Activated naive CD4-positive, alpha-beta T cell treated with anti-CD3 and anti-CD28 coated beads, Interleukin-2, amount 10 ng/mL, durations not matched to agents 7 days and 5 days (primary cell): ENCODE measurements at regions of chr4 and their contacts with region 1.

Region 1: GRCh38 chr4:98995183-98996055 is at the start of gene METAP1:
- DNase-seq: peak; percentile 97
- H3K4me3 Mint-ChIP-seq: peak within 1 kb of the TSS; percentile 81
- H3K27ac Mint-ChIP-seq: peak within 1 kb of the TSS; percentile 98
- H3K4me1 Mint-ChIP-seq: peaks cover 31% of the 10 kb centered on the region
- H3K27me3 Mint-ChIP-seq: no peaks in the 10 kb centered on the region

Region 2: DNA sequence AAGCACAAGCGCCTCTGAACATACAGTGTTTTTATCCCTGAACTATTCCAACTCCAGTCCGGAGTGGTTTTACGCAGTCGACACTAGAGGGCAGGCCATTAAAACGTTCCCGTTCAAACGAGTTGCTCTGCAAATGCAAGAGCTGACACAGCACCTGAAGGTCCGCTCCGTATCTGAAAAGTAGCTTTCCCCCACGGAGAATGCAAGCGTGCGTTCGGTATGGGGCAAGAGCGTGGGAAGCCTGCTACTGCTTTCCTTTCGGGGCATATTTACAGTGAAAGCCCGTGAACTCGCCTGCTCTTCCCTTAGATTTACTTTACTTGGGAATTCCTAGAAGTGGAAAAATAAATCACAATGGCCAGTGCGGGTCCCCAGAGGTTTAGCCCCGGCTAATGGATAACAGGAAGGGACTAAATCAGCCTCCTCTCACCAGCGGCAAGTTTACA is 527.8 kb before region 1 on chr4:
- CTCF ChIA-PET with region 1: interaction called, 10 read pairs
- DNase-seq: peak; percentile 77
- H3K4me3 Mint-ChIP-seq: peak overlapping the region; percentile 60
- H3K27ac Mint-ChIP-seq: no peak overlapping the region
- H3K4me1 Mint-ChIP-seq: peaks cover 23% of the 10 kb centered on the region
- H3K27me3 Mint-ChIP-seq: no peaks in the 10 kb centered on the region

Region 3: DNA sequence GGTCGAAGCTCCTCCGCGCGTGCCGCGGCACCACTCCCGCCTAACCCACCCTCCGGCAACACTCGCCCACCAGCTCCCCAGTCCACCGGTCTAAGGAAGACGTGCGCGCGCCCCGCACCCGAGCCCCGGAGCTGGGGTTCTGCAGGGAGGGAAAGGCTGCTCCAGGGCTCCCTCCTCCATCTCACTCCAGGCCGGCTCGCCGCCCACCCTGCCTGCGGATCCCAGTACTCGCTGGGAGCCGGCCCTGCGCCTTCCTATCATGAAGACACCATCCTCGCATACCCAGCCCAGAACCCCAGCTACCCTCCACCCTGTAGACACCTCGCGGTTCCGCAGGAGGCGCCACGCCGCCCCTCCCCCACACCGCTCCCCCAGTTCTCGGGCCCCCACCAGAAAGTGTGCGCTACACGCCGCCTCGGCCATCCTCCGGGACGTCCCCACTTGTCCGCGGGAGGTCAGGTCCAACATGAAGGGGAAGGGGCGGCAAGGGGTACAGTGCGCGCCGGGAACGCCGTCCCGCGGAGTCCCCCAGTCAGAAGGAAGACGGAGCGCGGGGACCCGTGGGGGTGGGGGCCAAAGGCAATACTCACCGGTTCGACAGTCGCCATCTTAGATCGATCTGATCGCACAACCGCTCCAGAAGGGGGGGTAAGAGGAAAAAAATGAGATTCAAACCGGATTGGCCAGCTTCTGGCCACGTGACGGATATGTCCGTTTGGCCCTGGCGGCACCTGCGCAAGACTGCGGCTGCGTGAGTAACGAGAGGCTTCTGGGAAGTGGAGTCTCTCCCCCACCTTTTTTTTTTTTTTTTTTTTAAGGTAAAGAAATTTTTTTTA is 66.7 kb before region 1 on chr4 and contains the start of gene EIF4E:
- CTCF ChIA-PET with region 1: interaction called, 15 read pairs
- DNase-seq: peak; percentile 98
- H3K4me3 Mint-ChIP-seq: peak within 1 kb of the TSS; percentile 88
- H3K27ac Mint-ChIP-seq: peak within 1 kb of the TSS; percentile 97
- H3K4me1 Mint-ChIP-seq: peaks cover 46% of the 10 kb centered on the region
- H3K27me3 Mint-ChIP-seq: no peaks in the 10 kb centered on the region

Region 4: DNA sequence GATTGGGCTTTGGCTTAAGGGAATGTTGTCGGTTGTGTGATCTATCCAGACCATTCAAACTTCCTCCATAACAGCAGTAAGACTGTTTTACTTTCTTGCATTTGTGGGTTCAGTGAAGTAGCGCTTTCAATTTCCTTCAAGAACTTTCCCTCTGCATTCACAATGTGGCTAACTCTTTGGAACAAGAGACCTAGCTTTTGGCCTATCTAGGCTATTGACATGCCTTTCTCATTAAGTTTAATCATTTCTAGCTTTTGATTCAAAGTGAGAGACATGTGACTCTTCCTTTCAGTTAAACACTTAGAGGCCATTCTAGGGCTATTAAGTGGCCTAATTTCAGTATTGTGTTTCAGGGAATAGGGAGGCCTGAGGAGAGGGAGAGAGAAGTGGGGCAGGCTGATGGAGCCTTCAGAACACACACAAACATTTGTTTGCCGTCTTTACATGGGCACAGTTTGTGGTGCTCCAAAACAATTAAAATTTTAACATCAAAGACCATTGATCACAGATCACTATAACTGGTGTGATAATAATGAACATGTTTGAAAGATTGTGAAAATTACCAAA is 59.1 kb after region 1 on chr4:
- CTCF ChIA-PET with region 1: interaction called, 120 read pairs
- DNase-seq: no peak
- H3K4me3 Mint-ChIP-seq: no peak overlapping the region
- H3K27ac Mint-ChIP-seq: peak overlapping the region; percentile 53
- H3K4me1 Mint-ChIP-seq: peaks cover 37% of the 10 kb centered on the region
- H3K27me3 Mint-ChIP-seq: no peaks in the 10 kb centered on the region

Region 5: DNA sequence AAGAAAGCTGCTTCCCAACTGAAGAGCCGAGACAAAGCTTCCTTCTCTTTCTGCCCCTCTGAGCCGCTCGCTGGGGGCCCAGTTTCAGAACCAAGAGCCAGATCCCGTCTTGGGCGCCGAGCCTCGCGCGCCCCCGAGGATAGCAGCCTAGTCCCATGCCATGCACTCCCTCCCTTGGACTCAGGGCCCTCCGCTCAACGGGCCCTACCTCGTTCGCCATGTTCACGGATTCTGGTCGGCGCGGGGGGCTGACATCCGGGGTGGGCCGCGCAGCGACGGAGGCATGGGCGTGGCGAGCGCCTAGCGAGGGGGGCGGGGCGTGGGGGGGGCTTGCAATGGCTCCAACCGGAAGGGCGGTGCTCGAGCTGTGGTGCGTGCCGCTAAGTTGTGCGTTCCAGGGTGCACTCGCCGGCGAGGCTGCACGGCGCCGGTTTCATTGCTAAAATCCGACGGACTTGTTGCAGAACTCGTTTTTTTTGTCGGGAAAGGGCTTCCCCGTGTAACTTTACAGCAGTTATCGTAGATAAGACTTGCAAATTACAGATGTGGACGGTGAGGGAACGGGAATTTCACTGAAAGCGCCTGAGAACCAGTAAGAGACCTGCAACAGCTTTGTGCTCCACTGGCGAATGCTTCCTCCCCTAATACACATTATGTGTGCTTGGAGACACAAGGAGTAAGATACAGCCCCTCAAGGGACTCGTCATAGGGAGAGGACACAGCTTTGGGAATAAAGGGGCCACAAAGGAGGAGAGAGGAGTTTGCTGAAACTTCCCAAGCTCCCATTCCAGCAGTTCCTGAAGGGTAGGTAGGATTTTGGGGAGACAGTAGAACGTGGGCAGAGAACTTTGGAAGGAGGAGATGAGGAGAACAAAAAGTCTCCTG is 93.3 kb after region 1 on chr4 and contains the start of gene ADH5:
- CTCF ChIA-PET with region 1: interaction called, 13 read pairs
- DNase-seq: peak; percentile 94
- H3K4me3 Mint-ChIP-seq: peak within 1 kb of the TSS; percentile 92
- H3K27ac Mint-ChIP-seq: peak within 1 kb of the TSS; percentile 96
- H3K4me1 Mint-ChIP-seq: peaks cover 43% of the 10 kb centered on the region
- H3K27me3 Mint-ChIP-seq: no peaks in the 10 kb centered on the region

Region 6: DNA sequence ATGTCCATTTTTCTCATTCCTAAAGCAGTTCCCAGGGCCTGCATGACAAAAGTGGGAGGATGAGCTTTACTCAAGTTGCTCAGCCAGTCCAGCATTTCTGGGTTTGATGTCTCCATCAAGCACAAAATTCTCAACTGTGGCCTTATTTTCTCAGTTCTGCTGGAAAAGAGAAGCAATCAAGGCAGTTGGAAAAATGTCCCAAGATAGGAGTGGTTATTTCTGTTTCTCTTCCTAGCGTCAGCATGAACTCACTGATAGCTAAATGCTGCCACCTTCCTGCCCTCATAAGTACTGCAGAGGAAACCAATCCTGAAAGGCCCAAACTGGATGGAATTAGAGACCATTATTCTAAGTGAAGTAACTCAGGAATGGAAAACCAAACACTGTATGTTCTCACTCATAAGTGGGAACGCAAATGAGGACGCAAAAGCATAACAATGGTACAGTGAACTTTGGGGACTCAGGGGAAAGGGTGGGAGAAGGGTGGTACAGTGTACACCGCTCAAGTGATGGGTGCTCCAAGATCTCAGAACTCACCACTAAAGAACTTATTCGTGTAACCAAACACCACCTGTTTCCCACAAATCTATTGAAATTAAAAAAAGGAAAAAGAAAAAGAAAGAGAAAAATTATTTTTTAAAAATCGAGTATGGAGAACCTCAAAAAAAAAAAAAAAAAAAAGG is 410.2 kb after region 1 on chr4:
- CTCF ChIA-PET with region 1: interaction called, 29 read pairs
- DNase-seq: peak; percentile 73
- H3K4me3 Mint-ChIP-seq: no peak overlapping the region
- H3K27ac Mint-ChIP-seq: no peak overlapping the region
- H3K4me1 Mint-ChIP-seq: peaks cover 13% of the 10 kb centered on the region
- H3K27me3 Mint-ChIP-seq: no peaks in the 10 kb centered on the region

Region 7: GRCh38 chr4:99490286-99490685 is 494.9 kb after region 1 on chr4:
- CTCF ChIA-PET with region 1: no interaction called
- DNase-seq: no peak
- H3K4me3 Mint-ChIP-seq: no peak overlapping the region
- H3K27ac Mint-ChIP-seq: no peak overlapping the region
- H3K4me1 Mint-ChIP-seq: no peaks in the 10 kb centered on the region
- H3K27me3 Mint-ChIP-seq: peaks cover 4% of the 10 kb centered on the region